ENCODE measurements at regions of chr19 and their contacts with region 1.

Region 1: GRCh38 chr19:47013041-47013517 is 6.6 kb upstream of the NPAS1 start:
- DNase-seq: peak; percentile 75
- H3K4me3 Mint-ChIP-seq: no peak overlapping the region
- H3K27ac Mint-ChIP-seq: no peak overlapping the region
- H3K4me1 Mint-ChIP-seq: peaks cover 9% of the 10 kb centered on the region
- H3K27me3 Mint-ChIP-seq: peaks cover 5% of the 10 kb centered on the region

Region 2: GRCh38 chr19:47002107-47002766 is 10.8 kb before region 1 on chr19:
- CTCF ChIA-PET with region 1: interaction called, 10 read pairs
- intact Hi-C with region 1: no loop called
- DNase-seq: no peak
- H3K4me3 Mint-ChIP-seq: no peak overlapping the region
- H3K27ac Mint-ChIP-seq: no peak overlapping the region
- H3K4me1 Mint-ChIP-seq: no peaks in the 10 kb centered on the region
- H3K27me3 Mint-ChIP-seq: peaks cover 6% of the 10 kb centered on the region

Region 3: GRCh38 chr19:47075179-47075810 is 62.2 kb after region 1 on chr19:
- CTCF ChIA-PET with region 1: interaction called, 12 read pairs
- intact Hi-C with region 1: no loop called
- DNase-seq: no peak
- H3K4me3 Mint-ChIP-seq: no peak overlapping the region
- H3K27ac Mint-ChIP-seq: no peak overlapping the region
- H3K4me1 Mint-ChIP-seq: peaks cover 3% of the 10 kb centered on the region
- H3K27me3 Mint-ChIP-seq: no peaks in the 10 kb centered on the region

Region 4: DNA sequence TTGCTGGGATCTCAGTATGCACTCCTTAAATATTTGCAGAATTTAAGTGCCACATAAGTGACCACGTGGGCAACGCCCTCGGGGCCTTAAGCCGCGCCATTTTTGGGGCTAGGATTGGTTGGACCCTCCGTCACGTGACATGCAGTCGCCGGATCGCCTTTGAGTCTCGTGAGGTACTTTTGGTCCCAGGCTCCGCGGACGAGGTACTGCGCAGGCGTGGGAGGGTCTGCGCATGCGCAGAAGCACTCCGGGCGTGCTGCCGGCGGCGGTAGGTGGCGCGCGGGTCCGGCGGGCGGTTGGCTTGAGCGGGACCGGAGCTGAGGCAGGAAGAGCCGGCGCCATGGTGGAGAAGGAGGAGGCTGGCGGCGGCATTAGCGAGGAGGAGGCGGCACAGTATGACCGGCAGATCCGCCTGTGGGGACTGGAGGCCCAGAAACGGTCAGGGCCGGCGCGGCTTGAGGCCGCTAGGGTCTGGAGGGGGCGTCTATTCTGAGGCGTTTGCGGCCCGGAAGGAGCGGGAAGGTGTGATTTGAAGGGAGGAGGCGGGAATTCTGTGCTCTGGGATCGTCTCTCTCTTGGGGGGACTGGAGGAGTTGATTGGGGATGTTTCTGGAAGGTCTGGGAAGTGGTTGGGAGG is 117.6 kb after region 1 on chr19 and contains the start of gene SAE1:
- CTCF ChIA-PET with region 1: interaction called, 25 read pairs
- intact Hi-C with region 1: loop called (anchors 1 kb)
- DNase-seq: peak; percentile 95
- H3K4me3 Mint-ChIP-seq: peak within 1 kb of the TSS; percentile 99
- H3K27ac Mint-ChIP-seq: peak within 1 kb of the TSS; percentile 99
- H3K4me1 Mint-ChIP-seq: peaks cover 41% of the 10 kb centered on the region
- H3K27me3 Mint-ChIP-seq: no peaks in the 10 kb centered on the region
- total RNA-seq, gene SAE1: 160 to 161 TPM

Measured in activated naive CD4-positive, alpha-beta T cell treated with anti-CD3 and anti-CD28 coated beads for 36 hours (primary cell).